A549 (cell line): ENCODE measurements at regions of chr18 and their contacts with region 1.

Region 1: DNA sequence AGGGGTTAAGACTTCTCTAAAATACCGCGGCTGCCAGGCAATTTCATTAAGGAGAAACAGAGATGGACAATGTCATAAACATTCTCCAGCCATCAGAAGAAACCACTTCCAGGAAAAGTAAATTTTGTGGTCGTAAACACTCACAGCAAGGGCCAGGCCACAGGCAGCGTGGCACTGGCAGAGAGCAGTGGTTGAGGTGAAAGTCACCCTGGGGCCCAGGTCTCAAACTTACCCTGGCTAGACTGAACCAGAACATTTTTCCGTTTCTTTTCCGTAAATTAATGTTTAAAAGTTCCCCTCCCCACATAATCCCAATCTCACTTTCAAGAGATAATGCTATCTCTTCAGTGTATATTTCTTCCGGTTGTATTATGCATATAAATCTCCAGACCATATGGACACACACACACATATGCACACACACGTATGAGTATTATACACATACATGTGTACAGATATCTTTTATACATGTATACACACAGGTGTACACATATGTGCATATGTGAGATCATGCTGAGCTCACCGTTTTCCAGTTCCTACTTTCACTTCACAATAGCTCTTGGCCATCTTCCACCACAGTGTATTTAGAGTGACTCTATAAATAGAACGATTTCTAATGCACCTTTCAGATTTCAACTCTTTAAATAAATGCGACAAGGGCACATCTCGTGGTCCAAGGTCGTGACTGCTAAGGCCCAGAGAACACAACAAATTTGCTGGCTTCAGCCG is 90.1 kb downstream of the MALT1 start:
- DNase-seq: no peak
- ATAC-seq: no peak
- H3K4me3 ChIP-seq: no peak overlapping the region
- H3K27ac ChIP-seq: 0 out of 6 replicates have a peak overlapping the region, but pooled peaks of 1 of the 2 experiments have one; percentile 6
- H3K4me1 ChIP-seq: 0 out of 3 replicates have a peak, but pooled peaks cover 5% of the 10 kb centered on the region
- CTCF ChIP-seq: no peak
- EP300 ChIP-seq: no peak
- POLR2A ChIP-seq: no peak
- RAD21 ChIP-seq: no peak

Region 2: GRCh38 chr18:58400337-58400870 is 361.0 kb before region 1 on chr18:
- CTCF ChIA-PET with region 1: interaction called, 11 read pairs
- POLR2A ChIA-PET with region 1: no interaction called
- DNase-seq: no peak
- ATAC-seq: no peak
- H3K4me3 ChIP-seq: no peak overlapping the region
- H3K27ac ChIP-seq: peak overlapping the region; percentile 48 to 53; a peak in 5 of 6 replicates
- H3K4me1 ChIP-seq: peaks cover 25% of the 10 kb centered on the region
- CTCF ChIP-seq: no peak
- EP300 ChIP-seq: no peak
- POLR2A ChIP-seq: no peak
- RAD21 ChIP-seq: no peak; a peak in 1 of 5 replicates

Region 3: DNA sequence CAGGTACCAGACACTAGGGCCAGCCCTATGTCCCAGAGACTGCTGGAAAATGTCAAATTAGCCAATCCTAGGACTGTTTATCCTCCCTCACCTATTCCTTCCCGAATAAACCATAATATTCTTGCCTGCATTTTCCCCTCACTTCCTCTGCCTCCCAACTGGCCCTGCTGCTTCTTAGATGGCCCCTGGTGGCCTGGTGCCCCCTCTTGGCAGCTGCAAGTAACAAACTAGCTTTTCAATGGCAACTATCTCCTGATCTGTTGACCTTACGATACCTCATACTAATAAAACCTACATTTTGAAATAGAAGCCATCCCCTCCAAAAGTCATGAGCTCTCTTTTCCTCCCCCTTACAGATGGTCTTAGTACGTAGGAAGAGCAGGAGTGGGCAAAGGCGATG is 264.5 kb before region 1 on chr18:
- CTCF ChIA-PET with region 1: interaction called, 22 read pairs
- POLR2A ChIA-PET with region 1: no interaction called
- DNase-seq: peak; percentile 8 to 32
- ATAC-seq: no peak
- H3K4me3 ChIP-seq: no peak overlapping the region
- H3K27ac ChIP-seq: peak overlapping the region in 1 of 2 experiments; percentile 47; a peak in 1 of 6 replicates
- H3K4me1 ChIP-seq: peaks cover 15% of the 10 kb centered on the region; the same call in 2 of the 3 replicates
- CTCF ChIP-seq: no peak
- EP300 ChIP-seq: no peak
- POLR2A ChIP-seq: no peak
- RAD21 ChIP-seq: peak in 1 of 2 experiments; percentile 35; a peak in 2 of 5 replicates

Region 4: GRCh38 chr18:58800582-58800981 is 39.2 kb after region 1 on chr18:
- CTCF ChIA-PET with region 1: no interaction called
- POLR2A ChIA-PET with region 1: no interaction called
- DNase-seq: no peak
- ATAC-seq: no peak
- H3K4me3 ChIP-seq: no peak overlapping the region
- H3K27ac ChIP-seq: peak overlapping the region in 1 of 2 experiments; percentile 48; a peak in 2 of 6 replicates
- H3K4me1 ChIP-seq: 0 out of 3 replicates have a peak, but pooled peaks cover 5% of the 10 kb centered on the region
- CTCF ChIP-seq: no peak
- EP300 ChIP-seq: no peak
- POLR2A ChIP-seq: no peak
- RAD21 ChIP-seq: no peak